Mammary epithelial cell (primary cell): ENCODE measurements at regions of chr19 and their contacts with region 1.

Region 1: GRCh38 chr19:42325273-42325895 is at the start of gene MEGF8:
- DNase-seq: peak; percentile 98
- H3K4me3 ChIP-seq: peak within 1 kb of the TSS; percentile 68 to 95 (median 69)
- H3K27ac ChIP-seq: peak within 1 kb of the TSS; percentile 42
- H3K4me1 ChIP-seq: peaks cover 13% of the 10 kb centered on the region
- H3K27me3 ChIP-seq: no peaks in the 10 kb centered on the region
- CTCF ChIP-seq: peak; percentile 93 to 96
- total RNA-seq, gene MEGF8: 16.6 to 29.3 TPM

Region 2: GRCh38 chr19:42113641-42114348 is 211.6 kb before region 1 on chr19:
- CTCF ChIA-PET with region 1: no interaction called
- dilution Hi-C with region 1: loop called (anchors 5 kb)
- in situ Hi-C with region 1: no loop called
- intact Hi-C with region 1: loop called (anchors 1 kb)
- DNase-seq: peak; percentile 96
- H3K4me3 ChIP-seq: peak overlapping the region in 1 of 3 experiments; percentile 21
- H3K27ac ChIP-seq: peak overlapping the region; percentile 87
- H3K4me1 ChIP-seq: peaks cover 48% of the 10 kb centered on the region
- H3K27me3 ChIP-seq: no peaks in the 10 kb centered on the region
- CTCF ChIP-seq: peak; percentile 39 to 41

Region 3: GRCh38 chr19:42184401-42184861 is 141.0 kb before region 1 on chr19:
- CTCF ChIA-PET with region 1: no interaction called
- dilution Hi-C with region 1: loop called (anchors 5 kb)
- in situ Hi-C with region 1: no loop called
- intact Hi-C with region 1: no loop called
- DNase-seq: peak; percentile 62
- H3K4me3 ChIP-seq: no peak overlapping the region
- H3K27ac ChIP-seq: no peak overlapping the region
- H3K4me1 ChIP-seq: peaks cover 11% of the 10 kb centered on the region
- H3K27me3 ChIP-seq: no peaks in the 10 kb centered on the region
- CTCF ChIP-seq: peak; percentile 93 to 95

Region 4: GRCh38 chr19:42244347-42245220 is 80.8 kb before region 1 on chr19:
- CTCF ChIA-PET with region 1: no interaction called
- dilution Hi-C with region 1: no loop called
- in situ Hi-C with region 1: no loop called
- intact Hi-C with region 1: loop called (anchors 1 kb)
- DNase-seq: peak; percentile 90
- H3K4me3 ChIP-seq: peak overlapping the region; percentile 60 to 77 (median 72)
- H3K27ac ChIP-seq: peak overlapping the region; percentile 26
- H3K4me1 ChIP-seq: peaks cover 23% of the 10 kb centered on the region
- H3K27me3 ChIP-seq: no peaks in the 10 kb centered on the region
- CTCF ChIP-seq: peak; percentile 45 to 68

Region 5: DNA sequence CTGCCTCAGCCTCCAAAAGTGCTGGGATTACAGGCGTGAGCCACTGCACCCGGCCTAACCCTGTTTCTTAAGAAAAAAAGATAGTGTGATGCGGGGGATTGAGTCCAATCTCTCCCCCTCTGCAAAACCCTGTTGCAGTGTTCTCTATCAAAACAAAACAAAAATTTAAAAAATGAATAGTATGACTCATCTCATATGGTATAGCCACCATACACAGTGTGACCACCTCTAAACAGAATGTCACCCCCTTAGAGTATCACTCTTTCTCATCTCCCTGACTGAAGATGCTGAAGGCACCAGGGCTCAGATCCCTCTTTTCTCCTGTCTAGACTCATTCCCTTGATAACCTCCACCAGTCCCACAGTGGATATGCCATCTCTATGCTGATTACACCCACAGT is 63.6 kb before region 1 on chr19:
- CTCF ChIA-PET with region 1: no interaction called
- dilution Hi-C with region 1: no loop called
- in situ Hi-C with region 1: no loop called
- intact Hi-C with region 1: no loop called
- DNase-seq: no peak
- H3K4me3 ChIP-seq: no peak overlapping the region
- H3K27ac ChIP-seq: no peak overlapping the region
- H3K4me1 ChIP-seq: peaks cover 1% of the 10 kb centered on the region
- H3K27me3 ChIP-seq: no peaks in the 10 kb centered on the region
- CTCF ChIP-seq: no peak

Region 6: GRCh38 chr19:42301656-42302203 is 23.7 kb before region 1 on chr19 and contains the start of gene PRR19:
- CTCF ChIA-PET with region 1: no interaction called
- dilution Hi-C with region 1: no loop called
- in situ Hi-C with region 1: no loop called
- intact Hi-C with region 1: loop called (anchors 2 kb)
- DNase-seq: no peak
- H3K4me3 ChIP-seq: peak within 1 kb of the TSS; percentile 54 to 82 (median 73)
- H3K27ac ChIP-seq: no peak within 1 kb of the TSS
- H3K4me1 ChIP-seq: peaks cover 9% of the 10 kb centered on the region
- H3K27me3 ChIP-seq: no peaks in the 10 kb centered on the region
- CTCF ChIP-seq: no peak
- total RNA-seq, gene PRR19: 1.0 to 1.7 TPM

Region 7: DNA sequence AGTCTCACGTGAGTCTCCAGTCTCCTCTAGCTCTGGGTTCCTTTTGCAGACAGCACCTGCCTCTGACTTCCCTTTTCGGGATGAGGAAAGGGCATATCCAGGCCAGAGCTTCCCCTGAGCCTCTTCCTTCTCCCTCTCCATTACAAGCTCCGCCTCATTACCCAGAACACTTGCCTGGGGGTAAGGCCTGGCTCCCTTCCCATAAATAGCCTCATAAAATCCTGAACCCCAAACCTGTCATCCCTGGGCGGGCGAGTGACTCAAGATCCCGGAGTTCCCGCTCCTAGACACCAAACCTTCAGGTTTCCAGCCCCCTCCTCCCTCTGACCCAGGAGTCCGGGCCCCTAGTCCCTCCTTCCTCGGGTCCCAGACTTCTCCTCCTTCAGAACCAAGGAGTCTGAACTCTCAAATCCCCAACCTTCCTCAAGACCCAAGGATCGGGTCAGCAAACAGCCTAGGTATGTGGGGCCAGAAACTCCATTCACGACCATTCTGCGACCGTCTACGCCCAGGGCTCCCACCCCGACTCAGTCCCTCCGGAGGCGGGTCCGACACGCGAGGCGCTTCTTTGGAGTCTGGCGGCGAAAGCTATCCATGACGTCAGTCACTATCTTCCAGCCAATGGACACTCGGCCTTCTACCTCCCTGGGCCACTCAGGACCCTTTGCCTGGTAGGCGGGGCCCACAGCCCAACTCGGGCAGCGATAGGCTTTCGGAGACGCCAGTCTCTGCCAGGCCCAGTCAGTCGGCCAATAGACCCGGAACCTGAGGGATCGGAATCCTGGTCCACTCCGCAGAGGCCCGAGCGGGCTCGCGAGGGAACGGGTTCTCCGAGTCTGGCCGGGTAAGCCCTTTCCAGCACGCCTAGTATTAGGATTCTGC is 71.2 kb after region 1 on chr19:
- CTCF ChIA-PET with region 1: no interaction called
- dilution Hi-C with region 1: no loop called
- in situ Hi-C with region 1: no loop called
- intact Hi-C with region 1: loop called (anchors 5 kb)
- DNase-seq: peak; percentile 99
- H3K4me3 ChIP-seq: peak overlapping the region; percentile 37 to 57 (median 53)
- H3K27ac ChIP-seq: peak overlapping the region; percentile 95
- H3K4me1 ChIP-seq: peaks cover 14% of the 10 kb centered on the region
- H3K27me3 ChIP-seq: no peaks in the 10 kb centered on the region
- CTCF ChIP-seq: no peak

Region 8: GRCh38 chr19:42433503-42434260 is 108.3 kb after region 1 on chr19:
- CTCF ChIA-PET with region 1: no interaction called
- dilution Hi-C with region 1: no loop called
- in situ Hi-C with region 1: no loop called
- intact Hi-C with region 1: loop called (anchors 1 kb)
- DNase-seq: peak; percentile 39
- H3K4me3 ChIP-seq: no peak overlapping the region
- H3K27ac ChIP-seq: no peak overlapping the region
- H3K4me1 ChIP-seq: no peaks in the 10 kb centered on the region
- H3K27me3 ChIP-seq: no peaks in the 10 kb centered on the region
- CTCF ChIP-seq: peak; percentile 78 to 91